ENCODE measurements at regions of chr10 and their contacts with region 1.

Region 1: DNA sequence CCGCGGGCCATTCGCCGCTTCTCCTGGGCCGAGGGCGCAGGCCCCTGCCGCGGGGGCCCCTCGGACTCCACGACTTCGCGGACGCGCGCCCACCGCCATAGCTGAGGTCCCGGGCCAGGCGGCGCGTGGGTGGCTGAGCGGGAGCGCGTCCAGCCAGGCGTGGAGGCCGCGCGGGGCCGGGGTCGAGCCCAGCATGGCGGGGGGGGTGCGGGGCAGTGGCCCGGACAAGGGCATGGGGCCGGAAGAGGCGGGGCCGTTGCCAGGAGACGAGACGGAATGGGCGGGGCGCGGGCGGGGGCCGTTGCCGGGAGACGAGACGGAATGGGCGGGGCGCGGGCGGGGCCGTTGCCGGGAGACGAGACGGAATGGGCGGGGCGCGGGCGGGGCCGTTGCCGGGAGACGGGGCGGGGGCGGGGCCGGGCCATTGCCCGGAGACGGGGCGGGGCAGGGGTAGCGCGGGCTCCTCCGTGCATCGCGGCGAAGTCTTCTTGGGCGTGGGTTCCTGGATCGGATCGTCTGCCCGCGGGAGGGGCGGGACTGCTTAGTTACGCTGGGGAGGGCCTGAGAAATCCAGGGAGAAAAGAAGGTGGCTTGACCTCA is 14.8 kb downstream of the ADAM8 start:
- DNase-seq: peak; percentile 38
- ATAC-seq: peak; percentile 76
- H3K4me3 ChIP-seq: peak overlapping the region; percentile 66
- H3K27ac ChIP-seq: peak overlapping the region; percentile 91
- H3K4me1 ChIP-seq: peaks cover 21% of the 10 kb centered on the region
- H3K27me3 ChIP-seq: no peaks in the 10 kb centered on the region; the same call in 1 of the 2 replicates
- CTCF ChIP-seq: no peak
- POLR2A ChIP-seq: peak; percentile 56; the same call in 1 of the 2 replicates
- RAD21 ChIP-seq: no peak

Region 2: DNA sequence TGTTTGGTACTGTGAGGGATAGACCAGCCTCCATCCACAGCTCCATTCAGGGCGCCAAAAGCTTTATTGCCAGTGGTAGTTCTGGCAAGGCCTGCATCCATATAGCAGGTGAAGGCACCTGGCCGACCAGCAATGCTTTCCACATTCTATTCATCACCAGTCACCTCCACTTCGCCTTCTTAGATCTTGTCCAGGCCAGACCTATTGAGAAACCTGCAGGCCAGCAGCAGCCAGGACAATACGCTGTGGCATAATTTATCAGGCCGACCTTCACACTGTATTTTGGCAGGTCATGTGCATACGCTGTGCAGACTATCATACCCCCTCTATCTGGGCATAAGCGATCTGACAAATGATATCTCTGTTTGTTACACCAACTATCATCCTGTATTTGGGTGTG is 117.1 kb before region 1 on chr10:
- CTCF ChIA-PET with region 1: interaction called, 4 read pairs
- POLR2A ChIA-PET with region 1: no interaction called
- dilution Hi-C with region 1: no loop called
- in situ Hi-C with region 1: no loop called
- intact Hi-C with region 1: loop called (anchors 5 kb)
- DNase-seq: no peak
- ATAC-seq: no peak
- H3K4me3 ChIP-seq: no peak overlapping the region
- H3K27ac ChIP-seq: no peak overlapping the region
- H3K4me1 ChIP-seq: no peaks in the 10 kb centered on the region; the same call in 1 of the 2 replicates
- H3K27me3 ChIP-seq: peaks cover 12% of the 10 kb centered on the region
- CTCF ChIP-seq: no peak
- POLR2A ChIP-seq: no peak
- RAD21 ChIP-seq: no peak

Region 3: DNA sequence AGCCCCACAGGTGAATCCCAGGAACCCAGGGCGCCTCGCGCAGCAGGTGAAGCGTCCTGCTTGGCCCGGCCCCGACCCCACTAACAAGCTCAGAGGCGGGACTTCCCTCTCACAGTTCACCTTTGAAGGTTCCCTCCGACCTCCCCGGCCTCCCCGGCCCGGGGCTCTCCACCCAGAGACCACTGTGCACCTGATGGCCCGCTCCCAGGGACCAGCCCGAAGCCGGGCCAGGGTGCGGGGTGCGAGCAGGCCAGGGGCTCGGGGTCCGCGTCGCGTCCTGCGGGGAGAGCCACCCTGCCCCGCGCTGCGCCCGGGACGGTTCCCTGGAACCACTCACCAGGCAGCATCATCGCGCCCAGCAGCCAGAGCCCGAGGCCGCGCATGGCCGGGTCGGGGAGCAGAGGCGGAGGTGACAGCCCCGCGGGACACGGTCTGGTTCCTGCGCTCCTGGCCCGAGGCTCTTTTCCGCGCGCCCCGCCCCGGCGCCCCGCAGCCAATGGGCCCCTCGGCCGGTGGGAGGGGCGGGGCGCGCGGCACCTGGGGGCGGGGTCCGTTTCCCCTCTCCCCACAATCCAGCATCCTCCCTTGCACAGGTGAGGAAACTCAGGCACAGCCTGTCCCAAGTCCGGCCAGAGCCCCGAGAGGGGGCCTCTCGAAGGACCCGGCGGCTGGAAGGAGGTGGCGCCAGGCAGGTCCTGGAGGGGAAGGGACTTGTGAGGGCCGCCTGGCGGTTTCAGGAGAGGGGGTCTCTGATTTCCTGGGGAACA is 14.8 kb after region 1 on chr10 and contains the start of gene ADAM8:
- CTCF ChIA-PET with region 1: no interaction called
- POLR2A ChIA-PET with region 1: no interaction called
- dilution Hi-C with region 1: no loop called
- in situ Hi-C with region 1: no loop called
- intact Hi-C with region 1: loop called (anchors 1 kb)
- DNase-seq: no peak
- ATAC-seq: peak; percentile 52
- H3K4me3 ChIP-seq: no peak within 1 kb of the TSS
- H3K27ac ChIP-seq: no peak within 1 kb of the TSS
- H3K4me1 ChIP-seq: peaks cover 10% of the 10 kb centered on the region
- H3K27me3 ChIP-seq: peaks cover 9% of the 10 kb centered on the region
- CTCF ChIP-seq: no peak
- POLR2A ChIP-seq: no peak
- RAD21 ChIP-seq: no peak
- total RNA-seq, gene ADAM8: under 0.01 and 0.28 TPM in 2 replicates

Region 4: DNA sequence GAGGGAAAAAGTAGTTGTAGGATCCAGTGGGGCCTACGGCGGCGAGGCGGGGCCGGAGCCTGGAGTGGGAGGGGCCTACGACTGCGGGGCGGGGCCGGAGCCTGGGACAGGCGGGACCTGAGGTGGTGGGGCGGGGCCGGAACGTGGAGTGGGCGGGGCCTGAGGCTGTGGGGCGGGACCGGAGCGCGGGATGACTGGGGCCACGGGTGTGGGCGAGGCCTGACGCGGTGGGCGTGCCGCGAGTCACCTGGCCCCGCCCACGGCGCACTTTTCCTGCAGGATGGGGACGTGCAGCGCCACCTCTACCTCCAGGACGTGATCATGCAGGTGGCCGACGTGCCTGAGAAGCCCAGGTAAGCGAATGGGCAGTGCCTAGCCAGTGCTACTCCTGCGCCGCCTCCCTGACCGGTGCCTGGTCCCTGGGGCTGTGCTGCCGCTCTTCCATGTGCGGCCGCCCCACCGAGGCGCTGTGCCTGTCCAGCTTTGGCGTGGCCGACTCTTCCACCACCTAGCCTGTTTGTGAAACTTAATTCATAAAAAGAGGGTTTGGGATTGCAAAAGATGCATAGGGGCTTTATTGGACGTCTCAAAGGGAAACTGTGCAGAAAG is 47.4 kb after region 1 on chr10:
- CTCF ChIA-PET with region 1: interaction called, 5 read pairs
- POLR2A ChIA-PET with region 1: no interaction called
- dilution Hi-C with region 1: no loop called
- in situ Hi-C with region 1: no loop called
- intact Hi-C with region 1: loop called (anchors 5 kb)
- DNase-seq: peak; percentile 85
- ATAC-seq: peak; percentile 97
- H3K4me3 ChIP-seq: peak overlapping the region; percentile 67
- H3K27ac ChIP-seq: peak overlapping the region; percentile 81
- H3K4me1 ChIP-seq: peaks cover 8% of the 10 kb centered on the region
- H3K27me3 ChIP-seq: no peaks in the 10 kb centered on the region
- CTCF ChIP-seq: no peak
- POLR2A ChIP-seq: no peak
- RAD21 ChIP-seq: no peak

Measured in IMR-90 (cell line).